Common myeloid progenitor, CD34-positive (primary cell): ENCODE measurements at regions of chr22 and their contacts with region 1.

Region 1: DNA sequence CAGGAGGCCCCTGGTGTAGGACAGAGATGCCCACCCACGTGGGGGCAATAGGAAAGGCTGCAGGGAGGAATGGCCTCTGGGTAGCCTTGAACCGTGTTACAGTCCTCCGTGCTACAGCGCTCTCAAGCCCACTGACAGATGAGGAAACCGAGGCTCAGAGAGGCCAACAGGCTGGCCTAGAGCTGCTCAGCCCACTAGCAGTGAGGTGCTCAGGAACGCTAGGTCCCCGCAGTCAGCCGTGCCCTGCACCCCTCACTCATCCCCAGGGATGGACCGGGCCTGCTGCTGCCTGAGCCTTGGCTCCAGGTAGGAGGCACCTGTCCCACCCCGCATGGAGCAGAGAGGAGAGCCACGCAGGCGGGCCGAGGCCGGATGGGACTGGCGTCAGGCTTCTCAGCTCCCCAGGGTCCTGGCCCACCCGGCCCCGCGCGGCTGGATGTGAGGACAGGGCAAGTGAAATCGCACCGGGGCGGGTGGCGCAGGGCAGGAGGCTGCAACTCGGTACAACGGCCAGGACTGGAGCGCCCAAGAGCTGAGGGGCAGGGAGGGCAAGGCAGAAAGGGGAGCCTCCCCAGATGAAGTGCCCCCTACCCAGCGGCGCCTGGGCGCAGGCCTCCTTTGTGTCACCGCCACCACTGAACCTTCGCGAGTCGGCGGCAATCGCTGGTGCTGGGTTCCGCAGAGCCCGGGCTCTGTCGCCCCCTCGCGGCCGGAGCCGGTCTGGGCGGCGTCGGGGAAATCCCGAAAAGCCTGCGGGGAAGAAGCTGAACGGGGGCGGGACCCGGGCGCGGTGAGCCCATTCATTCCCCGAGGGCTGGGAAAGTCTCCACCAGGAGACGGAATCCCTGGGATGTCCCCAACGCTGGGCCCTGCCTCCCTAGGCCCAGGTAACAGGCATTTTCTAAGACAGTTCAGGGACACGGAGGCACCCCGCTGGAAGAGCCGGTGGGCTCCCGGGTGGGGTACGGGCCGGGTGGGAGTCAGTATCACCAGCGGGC is 8.4 kb upstream of the SLC2A11 start:
- DNase-seq: peak; percentile 72 to 83 (median 78)
- H3K4me3 ChIP-seq: peak overlapping the region in 5 of 7 experiments; percentile 15 to 65 (median 40)
- H3K27ac ChIP-seq: no peak overlapping the region
- H3K4me1 ChIP-seq: peaks cover 0 to 49% (median 42%) of the 10 kb centered on the region in 4 experiments
- H3K27me3 ChIP-seq: peaks cover 0 to 1% (median 0%) of the 10 kb centered on the region in 5 experiments

Region 2: DNA sequence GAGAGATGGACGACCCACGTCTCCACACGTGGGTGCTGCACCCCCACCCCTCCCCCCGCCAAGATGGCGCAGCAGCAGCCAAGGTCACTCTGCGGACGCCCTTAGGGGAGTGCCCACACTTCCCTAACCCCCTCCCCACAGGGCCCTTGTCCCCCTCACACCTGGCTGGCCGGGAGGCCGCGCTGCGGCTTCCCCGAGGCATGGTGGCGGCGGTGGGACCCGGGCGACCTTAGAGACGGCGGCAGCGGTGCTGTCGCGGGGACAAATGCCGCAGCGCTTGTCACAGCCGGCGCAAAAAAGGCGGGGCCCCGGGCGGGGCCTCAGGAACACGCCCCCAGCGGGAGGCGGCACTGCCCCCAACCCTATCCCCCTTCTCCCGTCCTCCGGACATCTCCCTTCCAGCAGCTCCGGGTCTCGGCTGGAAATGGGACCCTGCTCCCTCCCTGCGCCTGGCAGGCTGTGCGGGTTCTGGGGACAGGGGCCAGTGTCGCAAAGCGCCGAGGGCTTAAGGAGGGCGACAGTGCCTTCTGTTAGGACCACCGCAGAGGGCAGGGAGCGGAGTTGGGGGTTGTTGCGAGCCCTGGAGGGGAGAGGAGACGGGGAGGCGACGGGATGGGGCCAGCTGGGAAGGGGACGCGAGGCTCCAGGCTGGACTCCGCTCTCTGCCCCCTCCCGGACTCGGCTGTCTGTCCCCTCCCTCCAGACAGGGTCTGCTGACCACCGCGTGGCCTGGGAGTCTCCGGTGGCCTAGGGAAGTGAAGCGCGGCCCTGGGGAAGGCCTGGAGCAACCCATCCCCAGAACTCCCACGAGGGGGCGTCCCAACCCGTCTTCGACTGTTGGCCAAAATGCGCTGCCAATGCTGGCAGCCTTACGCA is 81.4 kb before region 1 on chr22 and contains the start of gene CHCHD10:
- CTCF ChIA-PET with region 1: interaction called, 47 read pairs
- POLR2A ChIA-PET with region 1: interaction called, 3 read pairs
- DNase-seq: peak; percentile 77 to 88 (median 85)
- H3K4me3 ChIP-seq: peak within 1 kb of the TSS; percentile 72 to 92 (median 83)
- H3K27ac ChIP-seq: peak within 1 kb of the TSS in 1 of 2 experiments; percentile 75
- H3K4me1 ChIP-seq: peaks cover 6 to 74% (median 66%) of the 10 kb centered on the region in 4 experiments
- H3K27me3 ChIP-seq: peaks cover 0 to 1% (median 0%) of the 10 kb centered on the region in 5 experiments

Region 3: DNA sequence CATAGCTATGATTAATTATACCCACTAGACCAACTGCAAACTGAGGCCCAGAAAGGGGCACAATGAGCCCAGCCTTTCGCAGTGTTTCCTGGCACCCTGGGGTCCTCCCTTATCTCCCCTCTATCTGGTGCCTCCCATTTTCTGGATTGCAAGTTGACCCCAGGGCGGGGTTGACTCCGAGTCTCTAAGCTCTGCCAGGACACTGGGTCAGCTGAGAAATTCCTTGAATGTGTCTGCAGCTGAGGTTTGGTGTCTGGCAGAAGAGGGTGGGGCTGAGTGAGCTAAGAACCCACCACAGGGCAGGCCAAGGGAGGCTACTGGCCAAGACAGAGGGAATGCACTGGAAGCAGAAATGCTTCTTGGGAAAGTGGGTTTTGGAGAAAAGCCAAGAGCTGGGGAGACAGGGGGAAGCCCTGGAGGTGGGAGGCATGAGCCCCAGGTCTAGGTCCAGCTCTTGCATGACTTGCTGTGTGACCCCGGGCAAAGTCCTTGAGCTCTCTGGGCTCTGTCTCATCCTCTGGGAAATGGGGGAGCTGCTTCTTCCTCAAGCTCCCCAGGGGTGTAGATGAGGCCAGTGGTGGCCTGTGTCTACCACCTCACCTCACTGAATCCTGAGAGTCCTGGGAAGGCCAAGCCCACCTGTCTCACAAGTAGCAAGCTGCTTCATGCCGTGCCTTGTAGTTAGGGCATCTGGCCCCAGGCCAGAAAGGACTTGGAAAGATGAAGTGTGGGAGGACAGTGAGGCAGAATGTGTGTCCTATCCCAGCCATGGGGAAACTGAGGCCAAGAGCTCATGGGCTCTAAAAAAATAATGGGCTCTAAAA is 74.4 kb before region 1 on chr22:
- CTCF ChIA-PET with region 1: interaction called, 47 read pairs
- POLR2A ChIA-PET with region 1: no interaction called
- DNase-seq: no peak
- H3K4me3 ChIP-seq: no peak overlapping the region
- H3K27ac ChIP-seq: no peak overlapping the region
- H3K4me1 ChIP-seq: peaks cover 2 to 24% (median 18%) of the 10 kb centered on the region in 4 experiments
- H3K27me3 ChIP-seq: peaks cover 0 to 10% (median 0%) of the 10 kb centered on the region in 5 experiments

Region 4: DNA sequence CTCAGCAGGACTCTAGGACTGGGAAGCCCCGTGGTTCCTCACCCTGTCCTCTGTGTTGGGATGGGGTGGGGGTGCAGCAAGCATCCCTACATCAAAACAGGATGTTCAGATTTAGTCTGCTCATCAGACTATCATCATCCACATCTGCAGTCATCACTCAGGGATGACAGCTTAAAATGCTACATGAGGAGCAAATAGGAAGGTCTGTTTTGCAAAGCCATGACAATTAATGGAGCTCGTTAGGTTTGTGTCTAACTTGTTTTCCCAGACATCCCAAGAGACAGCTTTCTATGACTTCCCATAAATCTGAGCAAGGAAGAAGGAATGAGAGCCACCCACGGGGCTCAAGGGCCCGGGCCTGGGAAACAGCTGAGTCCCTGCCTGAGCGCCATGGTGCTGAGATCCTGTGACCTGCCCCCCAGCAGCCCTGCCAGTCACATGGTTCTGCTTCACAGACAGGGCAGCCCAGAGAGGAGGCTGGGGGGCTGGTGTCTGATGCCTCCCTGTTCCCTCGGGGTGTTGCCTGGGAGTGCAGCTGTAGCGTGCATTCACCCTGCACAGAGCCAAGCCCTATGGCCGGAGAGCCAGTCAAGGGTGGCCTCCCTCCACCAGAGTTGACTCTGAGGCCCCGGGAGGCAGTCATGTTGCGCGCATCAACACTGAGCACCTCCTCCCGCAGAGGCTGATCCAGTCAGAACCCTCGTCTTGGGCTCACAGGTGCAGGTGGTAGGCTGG is 22.7 kb before region 1 on chr22:
- CTCF ChIA-PET with region 1: interaction called, 13 read pairs
- POLR2A ChIA-PET with region 1: interaction called, 12 read pairs
- DNase-seq: no peak
- H3K4me3 ChIP-seq: no peak overlapping the region
- H3K27ac ChIP-seq: no peak overlapping the region
- H3K4me1 ChIP-seq: no peaks in the 10 kb centered on the region
- H3K27me3 ChIP-seq: no peaks in the 10 kb centered on the region

Region 5: GRCh38 chr22:23834798-23835483 is 14.4 kb before region 1 on chr22:
- CTCF ChIA-PET with region 1: interaction called, 14 read pairs
- POLR2A ChIA-PET with region 1: interaction called, 12 read pairs
- DNase-seq: no peak
- H3K4me3 ChIP-seq: no peak overlapping the region
- H3K27ac ChIP-seq: peak overlapping the region in 1 of 2 experiments; percentile 25
- H3K4me1 ChIP-seq: peaks cover 2 to 26% (median 23%) of the 10 kb centered on the region in 4 experiments
- H3K27me3 ChIP-seq: no peaks in the 10 kb centered on the region

Region 6: GRCh38 chr22:23939017-23939357 is 89.7 kb after region 1 on chr22:
- CTCF ChIA-PET with region 1: no interaction called
- POLR2A ChIA-PET with region 1: no interaction called
- DNase-seq: no peak
- H3K4me3 ChIP-seq: no peak overlapping the region
- H3K27ac ChIP-seq: no peak overlapping the region
- H3K4me1 ChIP-seq: no peaks in the 10 kb centered on the region
- H3K27me3 ChIP-seq: no peaks in the 10 kb centered on the region

Region 7: GRCh38 chr22:23969071-23969470 is 119.8 kb after region 1 on chr22:
- CTCF ChIA-PET with region 1: no interaction called
- POLR2A ChIA-PET with region 1: no interaction called
- DNase-seq: no peak
- H3K4me3 ChIP-seq: no peak overlapping the region
- H3K27ac ChIP-seq: no peak overlapping the region
- H3K4me1 ChIP-seq: no peaks in the 10 kb centered on the region
- H3K27me3 ChIP-seq: no peaks in the 10 kb centered on the region

Region 8: DNA sequence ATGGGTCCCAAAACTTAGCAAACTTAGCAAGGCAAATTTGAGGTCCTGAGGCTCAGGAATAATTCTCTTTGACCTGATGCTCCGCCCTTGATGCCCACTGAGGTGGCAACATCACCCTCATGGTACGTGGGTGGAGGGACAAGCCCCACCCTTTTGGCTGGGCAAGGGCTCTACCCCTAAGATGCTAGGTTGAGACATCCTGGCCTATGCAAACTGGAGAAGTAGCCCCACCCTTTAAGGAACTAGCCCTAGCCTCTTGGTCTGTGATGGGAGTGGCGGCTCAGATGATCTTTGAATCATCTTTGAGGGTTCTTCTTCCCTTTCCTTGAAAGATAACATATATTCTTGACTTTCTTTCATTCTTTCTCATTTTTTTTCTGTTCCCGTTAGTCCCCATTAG is 194.7 kb after region 1 on chr22:
- CTCF ChIA-PET with region 1: no interaction called
- POLR2A ChIA-PET with region 1: no interaction called
- DNase-seq: no peak
- H3K4me3 ChIP-seq: no peak overlapping the region
- H3K27ac ChIP-seq: no peak overlapping the region
- H3K4me1 ChIP-seq: no peaks in the 10 kb centered on the region
- H3K27me3 ChIP-seq: no peaks in the 10 kb centered on the region